HepG2 (cell line): ENCODE measurements at regions of chr15 and their contacts with region 1.

Region 1: DNA sequence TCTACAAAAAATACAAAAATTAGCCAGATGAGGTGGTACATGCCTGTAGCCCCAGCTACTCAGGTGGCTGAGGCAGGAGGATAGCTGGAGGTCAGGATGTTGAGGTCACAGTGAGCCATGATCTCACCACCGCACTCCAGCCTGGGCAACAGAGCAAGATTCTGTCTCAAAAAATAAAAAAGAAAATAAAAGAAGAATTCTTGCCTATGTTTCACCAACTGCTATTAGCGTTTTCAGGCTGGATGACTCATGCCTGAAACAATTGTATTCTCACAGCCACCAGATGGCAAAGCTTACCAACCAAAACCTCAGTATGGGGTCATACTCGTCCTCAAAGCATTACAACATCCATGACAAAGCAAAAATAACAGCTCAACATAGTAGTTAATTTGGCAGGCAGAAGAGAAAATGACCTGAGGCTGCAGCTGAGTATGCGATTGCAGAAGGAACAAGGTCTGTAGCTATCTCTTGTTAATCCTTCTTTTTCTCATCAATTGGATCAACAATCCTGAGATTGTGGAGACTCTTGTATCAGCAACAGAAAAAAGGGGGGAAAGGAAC is 52.2 kb downstream of the TP53BP1 start:
- DNase-seq: peak; percentile 84
- ATAC-seq: peak; percentile 92
- H3K4me3 ChIP-seq: no peak overlapping the region
- H3K27ac ChIP-seq: peak overlapping the region; percentile 51
- H3K4me1 ChIP-seq: peaks cover 16% of the 10 kb centered on the region
- H3K27me3 ChIP-seq: no peaks in the 10 kb centered on the region
- CTCF ChIP-seq: peak; percentile 67
- EP300 ChIP-seq: 0 out of 4 replicates have a peak, but pooled peaks of 1 of the 2 experiments have one; percentile 39
- POLR2A ChIP-seq: no peak
- RAD21 ChIP-seq: peak; percentile 46; the same call in 1 of the 2 replicates

Region 2: DNA sequence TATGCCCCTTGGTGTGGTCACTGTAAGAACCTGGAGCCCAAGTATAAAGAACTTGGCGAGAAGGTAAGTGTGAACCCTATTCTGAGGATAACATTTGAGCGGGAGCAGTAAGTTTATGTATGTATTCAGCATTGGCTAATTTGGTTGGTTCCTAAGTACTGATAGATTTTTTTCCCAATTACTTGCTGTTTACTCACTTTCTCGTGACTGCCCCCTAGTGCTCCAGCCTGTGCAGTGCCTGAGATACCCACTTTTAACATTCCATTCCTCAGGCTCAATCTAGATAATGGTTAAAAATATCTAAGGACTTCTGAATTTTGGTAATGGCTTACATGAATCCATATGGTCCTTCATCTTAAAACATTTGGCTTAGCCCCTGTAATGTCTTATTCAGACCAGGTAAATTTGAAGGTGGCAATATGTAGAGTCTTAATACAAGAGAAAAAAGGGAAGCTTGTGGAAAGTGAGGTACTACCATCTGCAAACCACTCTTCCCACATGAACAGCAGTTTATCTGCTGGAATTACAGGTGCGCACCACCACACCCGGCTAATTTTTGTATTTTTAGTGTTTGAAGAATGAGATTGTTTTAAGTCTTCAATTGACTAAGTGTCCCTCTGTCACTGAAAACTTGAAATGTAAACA is 328.9 kb after region 1 on chr15:
- CTCF ChIA-PET with region 1: no interaction called
- POLR2A ChIA-PET with region 1: no interaction called
- in situ Hi-C with region 1: loop called (anchors 25 kb)
- intact Hi-C with region 1: no loop called
- DNase-seq: peak; percentile 50
- ATAC-seq: peak; percentile 69
- H3K4me3 ChIP-seq: no peak overlapping the region
- H3K27ac ChIP-seq: no peak overlapping the region
- H3K4me1 ChIP-seq: 0 out of 2 replicates have a peak, but pooled peaks cover under 1% of the 10 kb centered on the region
- H3K27me3 ChIP-seq: no peaks in the 10 kb centered on the region
- CTCF ChIP-seq: peak; percentile 65
- EP300 ChIP-seq: no peak
- POLR2A ChIP-seq: no peak
- RAD21 ChIP-seq: peak; percentile 21; the same call in 1 of the 2 replicates